HepG2 (cell line): ENCODE measurements at regions of chr11 and their contacts with region 1.

Region 1: GRCh38 chr11:61827571-61828378 is at the start of gene FADS2:
- DNase-seq: peak; percentile 55
- ATAC-seq: peak; percentile 79
- H3K4me3 ChIP-seq: peak within 1 kb of the TSS; percentile 62 to 91 (median 82)
- H3K27ac ChIP-seq: peak within 1 kb of the TSS; percentile 74
- H3K4me1 ChIP-seq: peaks cover 41% of the 10 kb centered on the region
- H3K27me3 ChIP-seq: no peaks in the 10 kb centered on the region
- CTCF ChIP-seq: peak; percentile 55
- EP300 ChIP-seq: no peak
- POLR2A ChIP-seq: peak; percentile 62 to 90
- RAD21 ChIP-seq: no peak
- total RNA-seq, gene FADS2: 54.7 and 124 TPM in 2 replicates

Region 2: GRCh38 chr11:61816736-61817455 is 10.9 kb before region 1 on chr11 and contains the start of gene FADS1:
- CTCF ChIA-PET with region 1: interaction called, 3 read pairs
- POLR2A ChIA-PET with region 1: interaction called, 49 read pairs
- in situ Hi-C with region 1: no loop called
- intact Hi-C with region 1: no loop called
- DNase-seq: peak; percentile 95
- ATAC-seq: peak; percentile 71
- H3K4me3 ChIP-seq: peak within 1 kb of the TSS; percentile 74 to 94 (median 81)
- H3K27ac ChIP-seq: peak within 1 kb of the TSS; percentile 99
- H3K4me1 ChIP-seq: peaks cover 52% of the 10 kb centered on the region
- H3K27me3 ChIP-seq: no peaks in the 10 kb centered on the region; a peak in 1 of 5 replicates
- CTCF ChIP-seq: peak; percentile 95
- EP300 ChIP-seq: 0 out of 4 replicates have a peak, but pooled peaks of 1 of the 2 experiments have one; percentile 10
- POLR2A ChIP-seq: no peak
- RAD21 ChIP-seq: peak; percentile 74; the same call in 1 of the 2 replicates
- total RNA-seq, gene FADS1: 65.8 and 108 TPM in 2 replicates